Activated naive CD4-positive, alpha-beta T cell treated with anti-CD3 and anti-CD28 coated beads for 36 hours (primary cell): ENCODE measurements at regions of chr7 and their contacts with region 1.

Region 1: DNA sequence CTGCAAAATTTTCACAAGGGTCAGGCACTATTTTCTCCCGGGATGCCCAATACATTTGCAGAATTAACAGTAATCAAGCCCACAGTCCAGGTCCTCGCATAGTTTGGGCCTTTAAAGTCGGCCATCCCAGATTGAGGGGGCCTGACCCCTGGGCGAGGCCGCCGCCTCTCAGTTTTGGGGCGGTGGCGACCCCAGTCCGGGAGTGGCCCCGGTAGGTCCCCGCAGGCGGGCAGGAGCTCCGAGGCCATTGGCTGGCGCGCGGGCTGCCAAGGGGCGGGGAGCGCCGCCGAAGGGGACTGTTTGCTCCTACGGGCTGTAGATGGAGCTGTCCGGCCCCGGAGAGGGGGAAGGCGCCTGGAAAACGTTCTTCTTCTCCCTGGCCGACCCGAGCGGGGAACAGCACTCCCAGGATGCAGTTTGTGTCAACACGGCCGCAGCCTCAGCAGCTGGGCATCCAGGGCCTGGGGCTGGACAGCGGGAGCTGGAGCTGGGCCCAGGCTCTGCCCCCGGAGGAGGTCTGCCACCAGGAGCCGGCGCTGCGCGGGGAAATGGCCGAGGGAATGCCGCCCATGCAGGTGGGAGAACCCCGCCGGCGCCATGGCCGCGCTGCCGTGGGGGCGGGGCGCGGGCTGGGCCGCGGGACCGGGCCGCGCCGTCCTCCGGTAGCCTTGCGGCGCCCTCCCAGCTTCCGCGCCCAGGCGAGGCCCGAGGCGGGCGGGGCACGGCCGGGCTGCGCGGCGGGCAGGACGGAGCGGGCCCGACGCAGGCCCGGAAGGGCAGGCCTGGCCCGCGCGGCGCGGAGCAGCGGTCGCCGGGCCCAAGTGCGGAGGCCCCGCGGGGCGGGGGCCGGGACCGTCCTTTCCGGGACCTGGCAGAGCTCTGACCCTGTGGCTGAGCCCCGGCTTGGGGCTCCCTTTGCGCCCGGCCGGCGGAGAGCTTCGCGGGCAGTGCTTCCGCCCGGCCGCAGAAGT is at the start of gene ZNF282:
- DNase-seq: peak; percentile 85
- H3K4me3 Mint-ChIP-seq: peak within 1 kb of the TSS; percentile 85
- H3K27ac Mint-ChIP-seq: peak within 1 kb of the TSS; percentile 78
- H3K4me1 Mint-ChIP-seq: peaks cover 30% of the 10 kb centered on the region
- H3K27me3 Mint-ChIP-seq: no peaks in the 10 kb centered on the region
- total RNA-seq, gene ZNF282: 21.6 to 22.0 TPM

Region 2: GRCh38 chr7:149046416-149046815 is 149.0 kb before region 1 on chr7:
- CTCF ChIA-PET with region 1: no interaction called
- intact Hi-C with region 1: no loop called
- DNase-seq: no peak
- H3K4me3 Mint-ChIP-seq: no peak overlapping the region
- H3K27ac Mint-ChIP-seq: no peak overlapping the region
- H3K4me1 Mint-ChIP-seq: no peaks in the 10 kb centered on the region
- H3K27me3 Mint-ChIP-seq: no peaks in the 10 kb centered on the region

Region 3: GRCh38 chr7:149147072-149147751 is 48.3 kb before region 1 on chr7 and contains the start of gene ZNF398:
- CTCF ChIA-PET with region 1: interaction called, 7 read pairs
- intact Hi-C with region 1: loop called (anchors 2 kb)
- DNase-seq: peak; percentile 73
- H3K4me3 Mint-ChIP-seq: peak within 1 kb of the TSS; percentile 87
- H3K27ac Mint-ChIP-seq: peak within 1 kb of the TSS; percentile 91
- H3K4me1 Mint-ChIP-seq: peaks cover 33% of the 10 kb centered on the region
- H3K27me3 Mint-ChIP-seq: no peaks in the 10 kb centered on the region
- total RNA-seq, gene ZNF398: 4.3 to 5.0 TPM

Region 4: DNA sequence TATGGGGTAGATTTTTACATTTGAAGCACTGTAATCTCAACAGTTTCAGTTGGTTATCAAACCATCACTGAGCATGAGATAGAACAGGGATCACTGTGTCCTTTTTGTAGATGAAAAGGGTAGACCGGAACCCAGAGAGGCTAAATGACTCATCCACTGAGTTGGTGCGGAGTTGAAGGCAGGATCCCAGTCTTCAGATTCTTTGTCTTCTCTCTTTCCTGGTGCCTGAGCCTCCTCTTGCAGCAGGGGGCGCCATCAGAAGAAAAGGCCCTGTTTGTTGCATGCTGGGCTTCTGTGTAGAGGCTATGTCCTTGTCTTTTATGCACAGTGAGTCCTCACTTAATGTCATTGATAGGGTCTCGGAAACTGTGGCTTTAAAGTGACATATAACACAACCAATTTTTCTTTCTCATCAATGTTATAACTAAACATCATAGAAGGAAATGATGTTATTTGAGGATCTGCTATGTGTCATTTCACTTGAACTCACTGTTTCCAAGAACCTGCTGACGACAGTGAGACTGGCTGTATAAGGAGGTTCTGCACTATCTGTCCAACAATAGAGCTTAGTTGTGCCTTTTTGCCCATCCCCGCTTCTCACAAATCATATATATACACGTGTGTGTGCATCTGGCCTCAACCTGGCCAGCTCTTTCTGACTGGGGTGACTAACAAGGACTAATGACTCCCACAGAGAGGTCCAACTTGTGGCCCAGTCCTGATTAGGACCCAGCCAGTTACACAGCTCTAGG is 14.2 kb after region 1 on chr7:
- CTCF ChIA-PET with region 1: interaction called, 4 read pairs
- intact Hi-C with region 1: loop called (anchors 1 kb)
- DNase-seq: peak; percentile 86
- H3K4me3 Mint-ChIP-seq: no peak overlapping the region
- H3K27ac Mint-ChIP-seq: peak overlapping the region; percentile 72
- H3K4me1 Mint-ChIP-seq: peaks cover 5% of the 10 kb centered on the region
- H3K27me3 Mint-ChIP-seq: no peaks in the 10 kb centered on the region

Region 5: DNA sequence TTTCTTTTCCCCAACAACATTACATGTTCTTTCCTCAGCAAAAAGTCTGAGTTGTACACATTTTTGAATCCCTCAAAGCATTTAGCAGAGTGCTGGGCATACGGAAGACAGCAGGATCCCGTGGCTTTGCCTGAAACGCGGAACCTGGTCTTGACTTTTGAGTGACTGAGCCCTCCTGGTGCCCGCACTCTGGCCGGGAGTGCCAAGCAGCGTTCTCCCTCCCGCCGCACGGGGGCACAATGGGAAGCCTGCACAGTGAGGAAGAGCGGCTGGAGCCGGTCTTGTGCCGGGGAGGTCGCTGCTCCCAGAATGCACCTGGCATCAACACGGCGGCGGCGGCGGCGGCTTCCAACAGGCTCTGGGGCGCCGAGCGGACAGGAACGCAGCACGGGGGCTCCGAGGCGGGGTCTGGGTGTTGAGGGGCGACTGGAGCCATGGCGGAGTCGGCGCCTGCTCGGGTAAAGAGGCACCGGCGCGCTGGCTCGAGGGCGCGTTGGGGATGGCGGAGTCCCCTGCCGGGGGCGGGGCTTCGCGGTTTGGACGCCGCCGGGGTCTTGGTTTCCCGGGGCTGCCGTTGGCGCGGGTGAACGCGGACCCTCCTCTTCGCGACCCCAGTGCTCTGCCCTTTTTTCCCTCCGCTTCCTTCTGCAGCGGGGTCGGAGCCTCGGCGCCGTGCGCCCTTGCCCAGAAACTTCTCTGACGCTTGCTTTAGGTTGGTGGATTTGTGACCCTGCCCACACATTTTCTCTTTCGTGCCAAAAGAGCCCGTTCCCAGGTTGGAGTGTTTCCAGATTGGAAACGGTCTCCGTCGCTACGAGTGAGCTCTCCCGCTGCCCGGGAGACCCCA is 44.1 kb after region 1 on chr7 and contains the start of gene ZNF212:
- CTCF ChIA-PET with region 1: no interaction called
- intact Hi-C with region 1: loop called (anchors 1 kb)
- DNase-seq: peak; percentile 93
- H3K4me3 Mint-ChIP-seq: peak within 1 kb of the TSS; percentile 89
- H3K27ac Mint-ChIP-seq: peak within 1 kb of the TSS; percentile 90
- H3K4me1 Mint-ChIP-seq: peaks cover 38% of the 10 kb centered on the region
- H3K27me3 Mint-ChIP-seq: no peaks in the 10 kb centered on the region
- total RNA-seq, gene ZNF212: 9.0 to 10.4 TPM

Region 6: DNA sequence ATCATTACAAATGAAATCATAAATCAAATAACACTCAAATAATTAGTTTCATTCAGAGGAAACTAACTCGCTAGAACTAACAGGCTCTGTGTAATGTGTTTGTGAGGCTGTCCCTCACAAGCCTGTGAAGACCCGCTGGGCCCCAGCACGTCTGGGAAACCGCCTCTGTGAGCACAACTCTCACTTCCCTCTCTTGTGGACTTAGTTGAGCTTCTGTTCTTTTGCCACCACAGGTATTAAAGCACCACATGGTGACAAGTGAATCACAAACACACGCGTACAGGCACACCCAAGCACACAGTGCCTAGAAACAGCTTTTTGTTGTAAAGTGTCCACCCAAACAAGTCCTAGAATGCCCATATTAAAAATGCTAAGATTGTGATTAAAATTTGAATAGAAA is 214.4 kb after region 1 on chr7:
- CTCF ChIA-PET with region 1: interaction called, 6 read pairs
- intact Hi-C with region 1: loop called (anchors 1 kb)
- DNase-seq: no peak
- H3K4me3 Mint-ChIP-seq: no peak overlapping the region
- H3K27ac Mint-ChIP-seq: no peak overlapping the region
- H3K4me1 Mint-ChIP-seq: peaks cover 5% of the 10 kb centered on the region
- H3K27me3 Mint-ChIP-seq: peaks cover 20% of the 10 kb centered on the region